Activated B cell treated with CpG ODN at 0.5 μM for 24 hours (primary cell): ENCODE measurements at regions of chr10 and their contacts with region 1.

Region 1: DNA sequence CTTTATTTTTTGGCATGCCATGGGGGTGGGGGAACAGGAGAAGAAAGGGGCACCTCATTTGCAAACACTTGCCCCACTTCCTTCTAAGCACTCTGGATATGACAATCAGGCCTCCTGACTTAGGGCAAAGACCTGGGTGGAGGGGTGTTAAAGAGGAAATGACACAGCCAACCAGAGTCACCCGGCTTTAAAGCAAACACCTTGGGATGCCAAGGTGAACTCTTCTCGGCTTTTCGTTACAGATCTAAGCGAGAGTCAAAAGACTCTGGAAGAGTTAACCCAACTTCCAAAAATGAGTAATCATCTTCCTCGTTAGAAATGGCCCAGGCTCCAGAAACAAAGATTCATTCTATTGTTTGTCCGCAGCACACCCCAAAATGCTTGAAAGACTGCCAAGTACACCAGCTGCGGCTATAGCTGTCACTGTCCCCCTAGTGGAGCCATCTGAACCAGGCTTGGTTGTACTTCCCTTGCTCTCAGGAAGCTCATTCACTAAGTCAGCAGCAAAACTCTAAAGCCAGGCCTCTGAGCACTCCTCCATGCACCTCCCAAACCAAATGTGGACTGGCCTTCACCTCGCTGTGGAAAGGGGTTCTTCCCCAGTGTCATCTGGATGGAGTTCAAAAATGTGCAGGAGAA is 24.8 kb downstream of the FAM53B start:
- DNase-seq: no peak
- ATAC-seq: peak; percentile 43
- H3K4me3 Mint-ChIP-seq: peak overlapping the region; percentile 69
- H3K27ac Mint-ChIP-seq: peak overlapping the region; percentile 93
- H3K4me1 Mint-ChIP-seq: peaks cover 98% of the 10 kb centered on the region
- H3K27me3 Mint-ChIP-seq: no peaks in the 10 kb centered on the region
- CTCF ChIP-seq: no peak

Region 2: DNA sequence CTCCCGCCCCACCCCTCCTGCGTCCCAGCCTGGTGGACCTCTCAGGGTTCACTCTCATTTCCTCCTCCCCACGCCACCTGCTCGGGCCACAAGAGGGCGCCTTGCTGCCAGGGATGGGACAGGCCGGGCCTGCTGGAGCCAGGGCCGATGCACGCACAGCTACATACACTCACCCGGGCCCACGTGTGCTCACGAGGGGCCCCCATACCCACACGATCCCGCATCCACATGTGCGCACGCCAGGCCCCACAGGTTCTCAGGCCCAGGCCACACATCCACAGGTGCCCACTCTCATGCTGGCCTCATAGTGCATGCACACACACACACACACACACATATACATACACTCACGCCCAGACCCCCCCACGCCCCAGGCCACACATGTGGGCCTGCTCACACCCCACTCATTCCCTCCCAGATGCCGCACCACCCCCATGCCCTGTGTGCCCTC is 189.1 kb before region 1 on chr10:
- CTCF ChIA-PET with region 1: interaction called, 29 read pairs
- POLR2A ChIA-PET with region 1: interaction called, 69 read pairs
- intact Hi-C with region 1: loop called (anchors 1 kb)
- DNase-seq: peak; percentile 86
- ATAC-seq: peak; percentile 91
- H3K4me3 Mint-ChIP-seq: no peak overlapping the region
- H3K27ac Mint-ChIP-seq: peak overlapping the region; percentile 71
- H3K4me1 Mint-ChIP-seq: peaks cover 56% of the 10 kb centered on the region
- H3K27me3 Mint-ChIP-seq: no peaks in the 10 kb centered on the region
- CTCF ChIP-seq: no peak

Region 3: DNA sequence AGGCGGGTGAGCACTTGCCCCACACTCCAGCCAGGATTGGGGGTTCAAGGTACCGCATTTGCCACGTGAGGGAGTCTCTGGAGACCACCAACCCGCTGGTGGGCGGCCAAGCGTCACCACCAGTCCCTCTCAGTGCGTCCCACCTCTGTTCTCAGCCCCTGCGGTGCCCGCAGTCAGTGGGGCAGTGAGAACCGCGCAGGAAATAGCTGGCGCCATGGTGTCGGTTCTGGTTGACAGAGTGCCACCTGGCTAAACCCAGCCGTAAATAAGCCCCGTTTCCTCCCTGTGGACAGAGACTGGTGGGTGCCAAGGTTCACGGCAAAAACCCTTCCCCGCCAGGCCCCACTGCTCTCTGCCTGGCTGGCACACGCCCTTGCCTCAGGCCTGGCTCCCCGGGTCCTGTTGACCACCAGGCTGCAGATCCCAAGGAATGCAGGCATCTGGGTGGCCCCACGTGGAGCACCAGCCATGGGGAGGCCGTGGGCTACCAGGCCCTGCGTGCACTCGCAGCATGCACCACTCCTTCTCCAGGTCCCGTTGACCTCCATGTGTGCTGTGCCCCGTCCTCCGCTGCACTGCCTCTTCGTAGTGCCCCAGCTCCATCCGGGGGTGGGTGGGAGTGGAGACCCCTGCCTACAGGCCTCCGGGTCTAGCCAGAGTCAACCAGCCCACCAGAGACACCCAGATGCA is 117.8 kb before region 1 on chr10:
- CTCF ChIA-PET with region 1: interaction called, 6 read pairs
- POLR2A ChIA-PET with region 1: interaction called, 50 read pairs
- intact Hi-C with region 1: loop called (anchors 1 kb)
- DNase-seq: peak; percentile 75
- ATAC-seq: peak; percentile 86
- H3K4me3 Mint-ChIP-seq: peak overlapping the region; percentile 70
- H3K27ac Mint-ChIP-seq: peak overlapping the region; percentile 94
- H3K4me1 Mint-ChIP-seq: peaks cover 97% of the 10 kb centered on the region
- H3K27me3 Mint-ChIP-seq: no peaks in the 10 kb centered on the region
- CTCF ChIP-seq: no peak

Region 4: DNA sequence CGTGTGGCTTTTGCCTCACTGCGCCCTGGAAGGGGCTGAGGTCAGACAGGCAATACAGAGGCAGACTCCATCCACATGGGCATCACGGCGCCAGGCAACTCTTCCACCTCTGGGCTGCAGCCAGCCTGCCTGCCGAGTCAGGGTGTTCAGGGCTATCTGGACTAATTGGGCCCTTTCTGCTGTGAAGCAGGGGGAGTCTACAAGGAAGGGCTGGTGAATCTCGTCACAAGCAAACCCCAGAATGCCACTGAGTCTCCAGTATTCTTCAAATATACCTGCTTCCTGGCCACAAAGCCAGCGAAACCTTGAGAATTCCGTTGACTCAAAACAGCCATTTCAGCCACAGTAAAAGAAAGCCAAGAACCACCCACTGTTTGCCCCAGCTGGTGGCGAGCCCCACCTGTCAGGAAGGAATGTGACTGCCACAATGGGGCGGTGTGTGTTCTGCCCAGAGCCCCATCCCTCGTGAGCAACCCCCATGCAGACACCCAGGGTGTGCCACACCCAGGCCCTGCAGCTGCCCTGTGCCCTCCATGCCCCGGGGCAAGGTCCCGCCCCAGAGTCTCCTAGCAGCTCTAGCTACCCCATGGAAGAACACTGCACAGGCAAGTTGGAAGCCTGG is 92.5 kb before region 1 on chr10:
- CTCF ChIA-PET with region 1: interaction called, 24 read pairs
- POLR2A ChIA-PET with region 1: interaction called, 28 read pairs
- intact Hi-C with region 1: no loop called
- DNase-seq: no peak
- ATAC-seq: peak; percentile 63
- H3K4me3 Mint-ChIP-seq: peak overlapping the region; percentile 46
- H3K27ac Mint-ChIP-seq: peak overlapping the region; percentile 95
- H3K4me1 Mint-ChIP-seq: peaks cover 99% of the 10 kb centered on the region
- H3K27me3 Mint-ChIP-seq: no peaks in the 10 kb centered on the region
- CTCF ChIP-seq: no peak

Region 5: DNA sequence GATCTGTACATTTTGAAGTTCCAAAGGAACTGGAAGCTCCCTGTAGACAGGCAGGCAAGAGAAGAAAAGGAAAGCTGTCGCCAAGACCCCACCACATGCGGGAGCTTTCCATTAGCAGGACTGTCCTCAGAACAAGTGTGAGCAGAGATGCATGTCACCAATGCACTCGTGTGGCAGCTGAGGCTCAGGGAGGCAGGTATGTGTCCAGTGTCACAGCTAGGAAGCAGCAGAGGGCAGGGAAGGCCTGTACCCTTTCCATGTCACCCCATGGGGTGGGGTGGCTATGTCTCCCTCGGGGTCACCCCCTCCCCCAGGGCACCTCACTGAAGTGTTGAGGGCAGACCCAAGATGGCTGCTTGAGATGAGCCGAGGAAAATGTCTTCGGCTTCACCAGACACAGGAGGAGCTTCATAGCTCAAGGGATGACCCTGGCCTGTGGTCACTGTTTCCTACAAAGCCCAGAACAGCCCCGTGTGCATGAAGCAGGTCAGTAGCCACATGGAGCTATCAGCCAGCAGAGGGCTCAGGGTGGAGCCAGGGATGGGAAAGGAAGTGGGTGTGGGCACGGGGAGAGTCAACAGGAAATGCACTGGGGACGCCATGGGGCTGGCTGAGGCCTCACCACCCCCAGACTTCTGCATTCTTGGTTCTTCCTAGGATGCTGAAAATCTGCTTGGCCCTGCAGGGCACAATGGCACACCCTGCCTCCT is 71.8 kb before region 1 on chr10:
- CTCF ChIA-PET with region 1: interaction called, 16 read pairs
- POLR2A ChIA-PET with region 1: interaction called, 34 read pairs
- intact Hi-C with region 1: loop called (anchors 2 kb)
- DNase-seq: no peak
- ATAC-seq: peak; percentile 64
- H3K4me3 Mint-ChIP-seq: peak overlapping the region; percentile 62
- H3K27ac Mint-ChIP-seq: peak overlapping the region; percentile 88
- H3K4me1 Mint-ChIP-seq: peaks cover 100% of the 10 kb centered on the region
- H3K27me3 Mint-ChIP-seq: no peaks in the 10 kb centered on the region
- CTCF ChIP-seq: no peak

Region 6: DNA sequence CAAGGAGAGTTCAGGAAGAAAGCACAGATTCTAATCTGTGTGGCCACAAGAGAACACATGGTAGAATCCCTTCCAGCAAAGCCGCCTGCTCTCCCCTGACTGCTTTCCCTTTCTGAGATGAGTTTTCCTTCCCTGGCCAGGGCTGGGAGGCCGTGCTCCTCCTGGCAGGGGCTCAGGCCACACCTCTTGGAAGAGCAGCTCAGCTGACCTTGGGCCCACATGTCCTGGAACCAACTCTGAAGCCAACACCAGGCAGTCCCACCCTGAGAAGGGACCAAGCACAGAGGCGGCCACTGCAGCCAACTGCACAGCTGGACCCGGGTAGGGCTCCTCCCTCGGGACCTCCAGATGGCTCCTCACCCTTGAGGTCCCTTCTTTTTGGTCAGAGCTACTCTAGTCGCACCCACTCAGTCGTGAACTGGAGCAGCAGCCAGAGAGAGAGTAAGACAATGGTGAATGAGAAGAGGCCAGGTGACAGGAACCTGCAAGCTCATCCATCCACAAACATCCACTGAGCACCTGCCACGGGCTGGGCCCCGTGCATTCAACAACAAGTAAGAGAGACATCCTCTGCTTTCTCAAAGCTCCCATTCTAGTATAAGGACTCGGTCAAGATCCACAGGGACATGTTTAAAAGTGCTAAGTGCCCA is 15.4 kb before region 1 on chr10:
- CTCF ChIA-PET with region 1: interaction called, 20 read pairs
- POLR2A ChIA-PET with region 1: interaction called, 78 read pairs
- intact Hi-C with region 1: loop called (anchors 1 kb)
- DNase-seq: no peak
- ATAC-seq: no peak
- H3K4me3 Mint-ChIP-seq: no peak overlapping the region
- H3K27ac Mint-ChIP-seq: peak overlapping the region; percentile 96
- H3K4me1 Mint-ChIP-seq: peaks cover 99% of the 10 kb centered on the region
- H3K27me3 Mint-ChIP-seq: no peaks in the 10 kb centered on the region
- CTCF ChIP-seq: no peak

Region 7: DNA sequence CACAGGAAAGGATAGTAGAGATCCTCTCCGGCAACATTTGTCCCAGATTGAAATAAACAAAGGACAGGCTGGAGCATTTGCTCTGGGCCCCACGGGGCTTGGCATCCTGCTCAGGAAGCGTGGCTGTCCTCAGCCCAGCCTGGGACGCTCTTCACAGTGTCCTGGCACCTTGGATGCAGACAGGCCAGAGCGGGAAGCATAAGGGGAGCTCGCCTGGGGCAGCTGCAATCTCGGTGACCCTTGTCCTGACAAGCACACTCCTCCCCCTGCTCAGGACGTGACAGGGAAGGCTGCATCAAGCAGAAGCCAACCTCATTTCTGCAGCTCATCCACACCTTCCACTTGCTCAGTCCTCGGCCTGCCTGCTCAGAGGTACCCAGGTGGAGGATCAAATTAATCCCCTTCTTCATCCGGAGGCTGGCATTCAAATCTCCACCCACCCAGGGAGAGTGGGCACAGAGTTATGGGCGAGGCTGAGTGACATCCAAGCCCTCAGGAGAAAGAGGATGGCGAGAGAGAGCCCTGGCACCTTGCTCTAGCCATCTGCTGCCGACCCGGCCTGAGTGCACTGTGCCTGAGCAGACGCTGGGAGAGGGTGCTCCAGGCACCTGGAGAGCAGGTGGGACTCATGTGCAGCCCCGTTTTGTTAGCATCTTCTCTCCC is 129.9 kb after region 1 on chr10:
- CTCF ChIA-PET with region 1: no interaction called
- POLR2A ChIA-PET with region 1: no interaction called
- intact Hi-C with region 1: no loop called
- DNase-seq: no peak
- ATAC-seq: no peak
- H3K4me3 Mint-ChIP-seq: no peak overlapping the region
- H3K27ac Mint-ChIP-seq: no peak overlapping the region
- H3K4me1 Mint-ChIP-seq: no peaks in the 10 kb centered on the region
- H3K27me3 Mint-ChIP-seq: no peaks in the 10 kb centered on the region
- CTCF ChIP-seq: no peak